Naive thymus-derived CD8-positive, alpha-beta T cell (primary cell): ENCODE measurements at regions of chr16 and their contacts with region 1.

Region 1: GRCh38 chr16:89534252-89534756 is 26.1 kb downstream of the SPG7 start:
- DNase-seq: peak in 9 of 10 donors; percentile 36 to 81 (median 56)
- ATAC-seq: peak; percentile 93 to 96
- H3K4me3 Mint-ChIP-seq: peak overlapping the region; percentile 36 to 80 (median 70)
- H3K27ac Mint-ChIP-seq: peak overlapping the region; percentile 84 to 98 (median 94)
- H3K4me1 Mint-ChIP-seq: peaks cover 7 to 23% (median 22%) of the 10 kb centered on the region in 4 donors
- H3K27me3 Mint-ChIP-seq: no peaks in the 10 kb centered on the region

Region 2: GRCh38 chr16:89549007-89549700 is 14.8 kb after region 1 on chr16:
- POLR2A ChIA-PET with region 1: interaction called, 15 read pairs
- DNase-seq: peak in 7 of 10 donors; percentile 24 to 82 (median 61)
- ATAC-seq: peak; percentile 90 to 94
- H3K4me3 Mint-ChIP-seq: peak overlapping the region; percentile 33 to 91 (median 78)
- H3K27ac Mint-ChIP-seq: peak overlapping the region; percentile 86 to 99 (median 96)
- H3K4me1 Mint-ChIP-seq: peaks cover 9 to 35% (median 24%) of the 10 kb centered on the region in 4 donors
- H3K27me3 Mint-ChIP-seq: no peaks in the 10 kb centered on the region

Region 3: GRCh38 chr16:89560378-89561141 is 26.3 kb after region 1 on chr16 and contains the start of gene RPL13:
- POLR2A ChIA-PET with region 1: interaction called, 19 read pairs
- DNase-seq: peak; percentile 86 to 96 (median 91)
- ATAC-seq: peak; percentile 91 to 93
- H3K4me3 Mint-ChIP-seq: peak within 1 kb of the TSS; percentile 92 to 98 (median 96)
- H3K27ac Mint-ChIP-seq: peak within 1 kb of the TSS; percentile 95 to 99 (median 98)
- H3K4me1 Mint-ChIP-seq: peaks cover 27 to 62% (median 56%) of the 10 kb centered on the region in 4 donors
- H3K27me3 Mint-ChIP-seq: no peaks in the 10 kb centered on the region
- polyA plus RNA-seq, gene RPL13: 5,034 to 7,902 (median 7,525) TPM